Right cardiac atrium (tissue), 5 donors: ENCODE measurements at regions of chr17 and their contacts with region 1.

Region 1: DNA sequence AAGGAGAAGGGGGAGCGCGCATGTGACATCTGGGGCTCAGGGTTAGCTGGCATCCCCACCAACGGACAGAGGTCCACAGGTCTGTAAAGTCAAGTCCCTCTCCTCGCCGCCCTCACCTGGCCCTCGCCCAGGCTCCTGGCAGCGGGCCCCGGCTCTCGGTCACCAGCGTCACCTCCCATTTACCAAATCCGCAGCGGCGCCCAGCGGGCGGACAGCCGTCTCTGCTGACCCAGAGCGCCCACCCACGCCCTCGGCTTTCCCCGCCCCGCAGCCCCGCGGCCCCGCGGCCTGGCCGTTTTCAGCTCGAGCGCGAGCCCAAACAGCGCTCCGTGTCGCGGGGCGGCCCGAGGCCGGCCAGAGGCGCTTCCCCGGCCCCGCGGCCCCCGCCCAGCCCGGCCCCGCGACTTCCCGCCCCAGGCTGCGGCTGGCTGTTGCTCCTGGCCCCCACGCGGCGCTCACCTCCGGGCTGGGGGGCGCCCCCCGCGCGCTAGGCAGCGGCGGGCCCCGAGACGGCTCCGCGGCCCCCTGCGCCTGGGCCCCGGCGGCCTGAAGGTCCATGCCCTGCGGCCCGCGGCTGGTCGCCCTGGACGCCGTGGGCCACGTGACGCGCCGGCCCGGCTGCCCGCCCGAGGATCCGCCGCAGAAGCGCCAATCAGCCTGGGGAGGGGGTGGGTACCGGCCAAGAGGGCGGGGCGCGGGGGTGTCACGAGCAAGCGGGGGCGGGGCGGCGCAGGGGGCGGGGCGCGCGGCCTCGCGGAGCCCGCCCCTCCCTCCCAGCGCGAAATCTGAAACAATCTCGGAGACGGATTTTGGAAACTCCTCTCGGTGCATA is at the start of gene COPRS:
- DNase-seq: peak; percentile 91 to 97 (median 96)
- ATAC-seq: peak; percentile 92 to 94
- H3K4me3 ChIP-seq: peak within 1 kb of the TSS; percentile 90
- H3K27ac ChIP-seq: peak within 1 kb of the TSS; percentile 53
- H3K4me1 ChIP-seq: peaks cover 6% of the 10 kb centered on the region
- H3K27me3 ChIP-seq: no peaks in the 10 kb centered on the region
- total RNA-seq, gene COPRS: 42.9 to 56.1 (median 46.0) TPM

Region 2: GRCh38 chr17:31900877-31901276 is 42.0 kb after region 1 on chr17:
- intact Hi-C with region 1: loop called in 1 of 4 experiments (anchors 2 kb)
- DNase-seq: no peak
- ATAC-seq: peak in 1 of 2 donors; percentile 6
- H3K4me3 ChIP-seq: peak overlapping the region; percentile 84
- H3K27ac ChIP-seq: no peak overlapping the region
- H3K4me1 ChIP-seq: no peaks in the 10 kb centered on the region
- H3K27me3 ChIP-seq: no peaks in the 10 kb centered on the region